IMR-90 (cell line): ENCODE measurements at regions of chr3 and their contacts with region 1.

Region 1: GRCh38 chr3:23183734-23184133 is 19.4 kb upstream of the UBE2E2 start:
- DNase-seq: peak; percentile 60
- ATAC-seq: peak; percentile 92
- H3K4me3 ChIP-seq: no peak overlapping the region
- H3K27ac ChIP-seq: no peak overlapping the region
- H3K4me1 ChIP-seq: no peaks in the 10 kb centered on the region
- H3K27me3 ChIP-seq: peaks cover 16% of the 10 kb centered on the region; the same call in 1 of the 2 replicates
- CTCF ChIP-seq: peak; percentile 67
- POLR2A ChIP-seq: no peak
- RAD21 ChIP-seq: peak; percentile 71

Region 2: DNA sequence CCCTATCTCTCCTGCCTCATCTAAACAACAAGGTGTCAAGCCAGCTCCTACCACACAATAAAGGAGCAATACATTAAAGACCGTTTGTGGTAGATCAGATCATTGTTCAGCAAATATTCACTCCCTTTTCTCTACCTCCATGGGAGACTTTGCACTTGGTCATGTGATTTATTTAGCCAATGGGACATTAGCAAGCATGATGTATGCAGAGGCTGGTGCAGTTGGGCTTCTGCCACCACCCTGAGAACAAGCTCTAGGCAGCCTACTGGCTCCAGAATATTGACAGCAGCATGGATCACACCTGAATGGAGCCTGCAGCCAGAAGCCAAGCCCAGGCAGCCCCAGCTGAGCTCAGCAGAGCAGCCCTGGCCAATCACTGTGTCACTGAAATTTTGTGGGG is 80.0 kb before region 1 on chr3:
- CTCF ChIA-PET with region 1: no interaction called
- POLR2A ChIA-PET with region 1: no interaction called
- dilution Hi-C with region 1: no loop called
- in situ Hi-C with region 1: no loop called
- intact Hi-C with region 1: no loop called
- DNase-seq: no peak
- ATAC-seq: no peak
- H3K4me3 ChIP-seq: no peak overlapping the region
- H3K27ac ChIP-seq: no peak overlapping the region
- H3K4me1 ChIP-seq: no peaks in the 10 kb centered on the region
- H3K27me3 ChIP-seq: no peaks in the 10 kb centered on the region; the same call in 1 of the 2 replicates
- CTCF ChIP-seq: no peak
- POLR2A ChIP-seq: no peak
- RAD21 ChIP-seq: no peak

Region 3: GRCh38 chr3:23264413-23264812 is 80.7 kb after region 1 on chr3:
- CTCF ChIA-PET with region 1: no interaction called
- POLR2A ChIA-PET with region 1: no interaction called
- dilution Hi-C with region 1: no loop called
- in situ Hi-C with region 1: no loop called
- intact Hi-C with region 1: no loop called
- DNase-seq: peak; percentile 80
- ATAC-seq: peak; percentile 72
- H3K4me3 ChIP-seq: no peak overlapping the region
- H3K27ac ChIP-seq: no peak overlapping the region
- H3K4me1 ChIP-seq: peaks cover 6% of the 10 kb centered on the region; the same call in 1 of the 2 replicates
- H3K27me3 ChIP-seq: no peaks in the 10 kb centered on the region
- CTCF ChIP-seq: no peak
- POLR2A ChIP-seq: no peak
- RAD21 ChIP-seq: no peak

Region 4: DNA sequence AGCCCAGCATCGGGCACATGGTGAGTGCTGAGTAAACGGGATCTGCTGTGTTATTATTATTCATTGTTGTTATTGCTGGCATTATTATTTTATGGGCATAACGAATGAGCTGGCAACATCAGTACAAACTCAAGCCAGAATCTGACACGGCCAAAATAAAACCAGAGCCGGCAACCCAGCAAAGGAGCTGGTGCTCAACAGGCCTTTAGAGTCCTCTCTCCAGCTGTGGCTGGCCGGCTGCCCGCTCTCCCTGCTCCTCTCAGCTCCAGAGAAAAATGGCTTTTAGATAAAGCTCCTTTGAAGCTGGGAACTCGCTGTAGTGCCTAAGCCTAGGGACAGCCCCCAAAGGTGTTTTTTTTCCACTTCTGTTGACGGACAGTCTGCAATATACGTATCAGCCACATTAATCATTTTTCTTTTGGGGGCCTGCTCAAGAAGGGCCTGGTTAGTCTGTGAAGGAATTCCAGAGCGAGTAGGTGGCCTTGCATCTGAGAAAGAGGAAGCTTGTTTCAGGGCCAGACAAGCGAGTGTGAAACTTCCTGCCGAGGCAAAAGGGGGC is 428.1 kb after region 1 on chr3:
- CTCF ChIA-PET with region 1: no interaction called
- POLR2A ChIA-PET with region 1: no interaction called
- dilution Hi-C with region 1: no loop called
- in situ Hi-C with region 1: no loop called
- intact Hi-C with region 1: loop called (anchors 5 kb)
- DNase-seq: peak; percentile 80
- ATAC-seq: peak; percentile 84
- H3K4me3 ChIP-seq: no peak overlapping the region
- H3K27ac ChIP-seq: peak overlapping the region; percentile 58
- H3K4me1 ChIP-seq: peaks cover 3% of the 10 kb centered on the region; the same call in 1 of the 2 replicates
- H3K27me3 ChIP-seq: no peaks in the 10 kb centered on the region
- CTCF ChIP-seq: no peak
- POLR2A ChIP-seq: no peak
- RAD21 ChIP-seq: no peak

Region 5: DNA sequence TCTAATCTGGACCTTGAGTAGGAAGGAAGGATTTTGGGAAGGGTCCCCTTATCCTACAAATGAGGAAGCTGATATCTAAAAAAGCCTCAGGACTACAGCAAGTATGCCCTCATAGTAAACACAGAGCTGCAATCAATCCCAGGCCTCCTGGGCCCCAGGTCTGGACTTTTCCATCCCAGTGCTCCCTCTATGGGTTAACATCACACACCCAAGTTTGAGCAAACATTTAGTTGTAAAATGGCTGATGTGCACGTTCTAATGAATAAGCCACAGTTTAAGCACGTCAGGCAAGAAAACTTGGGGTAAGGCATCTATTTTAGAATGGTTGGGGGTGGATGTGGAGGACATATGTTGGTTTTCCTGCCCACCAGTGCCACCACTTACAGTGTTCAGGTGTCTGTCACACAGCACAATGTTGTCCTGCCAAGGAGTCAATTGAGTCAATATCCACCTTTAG is 577.7 kb after region 1 on chr3:
- CTCF ChIA-PET with region 1: no interaction called
- POLR2A ChIA-PET with region 1: no interaction called
- dilution Hi-C with region 1: no loop called
- in situ Hi-C with region 1: no loop called
- intact Hi-C with region 1: loop called (anchors 10 kb)
- DNase-seq: peak; percentile 55
- ATAC-seq: peak; percentile 79; the same call in 1 of the 2 replicates
- H3K4me3 ChIP-seq: no peak overlapping the region
- H3K27ac ChIP-seq: no peak overlapping the region
- H3K4me1 ChIP-seq: peaks cover 4% of the 10 kb centered on the region; the same call in 1 of the 2 replicates
- H3K27me3 ChIP-seq: no peaks in the 10 kb centered on the region
- CTCF ChIP-seq: peak; percentile 48
- POLR2A ChIP-seq: no peak
- RAD21 ChIP-seq: peak; percentile 61